ENCODE measurements at regions of chr6 and their contacts with region 1.

Region 1: GRCh38 chr6:10194816-10195639 is 219.8 kb downstream of the TFAP2A start:
- DNase-seq: peak; percentile 37 to 75
- H3K4me3 ChIP-seq: no peak overlapping the region
- H3K27ac ChIP-seq: peak overlapping the region; percentile 22; the same call in 1 of the 2 replicates
- H3K4me1 ChIP-seq: peaks cover 20% of the 10 kb centered on the region
- H3K27me3 ChIP-seq: no peaks in the 10 kb centered on the region
- CTCF ChIP-seq: no peak

Region 2: GRCh38 chr6:9646342-9647067 is 548.5 kb before region 1 on chr6:
- CTCF ChIA-PET with region 1: interaction called, 11 read pairs
- POLR2A ChIA-PET with region 1: no interaction called
- intact Hi-C with region 1: no loop called
- DNase-seq: no peak
- H3K4me3 ChIP-seq: no peak overlapping the region
- H3K27ac ChIP-seq: no peak overlapping the region
- H3K4me1 ChIP-seq: no peaks in the 10 kb centered on the region
- H3K27me3 ChIP-seq: no peaks in the 10 kb centered on the region
- CTCF ChIP-seq: no peak